Activated CD4-positive, alpha-beta T cell treated with anti-CD3 and anti-CD28 coated beads, Interleukin-2, amount 10 ng/mL, durations not matched to agents 7 days and 5 days (primary cell): ENCODE measurements at regions of chr6 and their contacts with region 1.

Region 1: DNA sequence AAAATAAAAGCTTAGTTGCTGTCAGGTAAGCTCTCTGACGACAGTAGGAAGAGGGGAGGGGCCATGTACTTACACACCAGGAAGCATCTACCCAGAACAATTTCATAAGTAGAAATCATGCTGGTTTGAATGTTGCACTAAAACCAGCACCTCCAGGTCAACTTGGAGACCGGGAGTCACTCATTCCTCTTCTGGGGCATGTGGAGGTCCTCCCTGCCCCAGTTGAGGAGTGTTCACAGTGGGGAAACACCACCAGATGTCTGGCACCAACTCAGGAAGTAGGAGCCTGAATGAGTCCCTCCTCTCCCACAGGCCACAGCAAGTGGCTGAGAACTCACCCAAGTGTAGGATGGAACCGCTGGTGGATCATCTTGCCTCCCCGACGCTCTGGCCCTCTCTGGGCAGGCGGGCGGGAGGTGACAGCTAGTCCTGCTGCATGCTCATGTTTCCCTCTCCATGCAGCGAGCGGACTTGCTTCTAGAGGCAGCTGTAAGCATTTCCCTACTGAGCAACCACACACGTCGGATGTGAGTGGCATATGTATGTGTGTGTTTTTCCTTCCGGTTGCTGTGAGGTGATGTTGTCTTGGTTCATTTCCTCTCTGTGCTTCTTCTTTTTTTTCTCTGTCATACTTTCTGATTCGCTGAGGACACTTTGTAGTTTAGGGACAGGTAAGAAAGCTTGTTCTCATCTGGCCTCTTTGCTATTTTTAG is 149.5 kb upstream of the NEDD9 start:
- DNase-seq: peak; percentile 84
- H3K4me3 Mint-ChIP-seq: peak overlapping the region; percentile 88
- H3K27ac Mint-ChIP-seq: peak overlapping the region; percentile 98
- H3K4me1 Mint-ChIP-seq: peaks cover 59% of the 10 kb centered on the region
- H3K27me3 Mint-ChIP-seq: no peaks in the 10 kb centered on the region

Region 2: GRCh38 chr6:11207199-11207968 is 174.6 kb before region 1 on chr6:
- CTCF ChIA-PET with region 1: no interaction called
- POLR2A ChIA-PET with region 1: no interaction called
- DNase-seq: no peak
- H3K4me3 Mint-ChIP-seq: no peak overlapping the region
- H3K27ac Mint-ChIP-seq: no peak overlapping the region
- H3K4me1 Mint-ChIP-seq: peaks cover 61% of the 10 kb centered on the region
- H3K27me3 Mint-ChIP-seq: no peaks in the 10 kb centered on the region

Region 3: DNA sequence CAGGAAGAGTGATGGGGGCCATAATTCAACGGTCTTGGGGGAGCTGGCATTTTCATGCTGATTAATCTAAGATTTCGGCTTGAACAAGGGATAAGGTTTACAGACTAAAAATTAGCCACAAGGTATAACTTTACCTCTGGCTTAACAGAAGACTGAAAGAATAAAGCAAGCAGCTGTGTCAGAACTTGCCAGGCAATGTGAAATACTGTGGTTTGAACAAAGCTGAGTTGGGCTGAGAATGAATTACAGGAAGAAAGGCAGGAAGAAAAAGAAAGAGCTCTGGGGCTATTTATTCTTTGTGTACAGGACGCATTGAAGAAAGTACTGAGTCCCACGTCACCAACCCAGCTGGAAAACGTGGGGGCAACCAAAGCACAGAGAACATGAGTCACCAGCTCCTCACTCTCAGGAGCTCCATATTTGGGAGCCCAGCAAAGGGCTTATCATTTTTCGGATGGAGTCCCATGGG is 28.0 kb before region 1 on chr6:
- CTCF ChIA-PET with region 1: interaction called, 10 read pairs
- POLR2A ChIA-PET with region 1: no interaction called
- DNase-seq: peak; percentile 50
- H3K4me3 Mint-ChIP-seq: peak overlapping the region; percentile 5
- H3K27ac Mint-ChIP-seq: peak overlapping the region; percentile 58
- H3K4me1 Mint-ChIP-seq: peaks cover 60% of the 10 kb centered on the region
- H3K27me3 Mint-ChIP-seq: no peaks in the 10 kb centered on the region

Region 4: GRCh38 chr6:11366183-11366933 is 15.6 kb before region 1 on chr6:
- CTCF ChIA-PET with region 1: interaction called, 18 read pairs
- POLR2A ChIA-PET with region 1: interaction called, 4 read pairs
- DNase-seq: peak; percentile 55
- H3K4me3 Mint-ChIP-seq: peak overlapping the region; percentile 6
- H3K27ac Mint-ChIP-seq: peak overlapping the region; percentile 80
- H3K4me1 Mint-ChIP-seq: peaks cover 61% of the 10 kb centered on the region
- H3K27me3 Mint-ChIP-seq: no peaks in the 10 kb centered on the region